Esophagus squamous epithelium (tissue), 5 donors: ENCODE measurements at regions of chr10 and their contacts with region 1.

Region 1: DNA sequence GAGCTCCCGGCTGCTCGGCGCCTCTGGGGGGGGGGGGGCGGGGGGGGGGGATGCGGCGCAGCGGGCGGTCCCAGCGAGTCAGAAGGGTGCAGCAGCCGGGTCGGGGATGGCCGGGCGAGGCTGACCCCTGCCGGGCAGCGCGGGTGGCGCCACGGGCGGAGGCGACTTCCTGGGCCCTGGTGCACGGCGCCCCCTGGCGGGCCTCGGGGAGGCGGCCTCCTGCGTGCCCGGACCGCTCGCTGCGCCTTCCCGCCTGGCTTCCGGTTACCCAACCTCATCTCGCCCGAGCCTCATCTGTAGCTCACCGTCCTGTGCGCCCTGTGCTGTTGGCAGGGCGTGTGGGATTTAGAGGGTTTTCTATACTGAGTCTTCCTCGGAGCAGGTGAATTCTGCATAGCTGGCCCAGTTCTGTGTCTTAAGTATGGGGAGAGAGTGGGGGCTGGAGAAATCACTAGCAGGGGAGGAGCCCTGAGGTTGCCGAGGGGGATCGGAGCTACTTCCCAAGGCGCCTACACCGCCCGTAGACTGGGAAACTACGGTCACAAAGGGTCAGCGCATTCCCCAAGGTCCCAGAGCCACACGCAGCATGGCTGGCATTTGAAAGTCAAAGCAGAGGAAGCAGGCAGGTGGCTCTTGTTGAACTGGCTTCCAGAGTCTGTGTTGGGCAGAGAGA is 28.3 kb upstream of the WDFY4 start:
- DNase-seq: peak; percentile 45
- H3K4me3 ChIP-seq: peak overlapping the region; percentile 34 to 71 (median 43)
- H3K27ac ChIP-seq: peak overlapping the region in 3 of 4 donors; percentile 5 to 59 (median 8)
- H3K4me1 ChIP-seq: peaks cover 15 to 19% (median 17%) of the 10 kb centered on the region in 3 donors
- H3K27me3 ChIP-seq: peaks cover 0 to 21% (median 0%) of the 10 kb centered on the region in 4 donors
- CTCF ChIP-seq: peak; percentile 89 to 100 (median 99)
- POLR2A ChIP-seq: no peak

Region 2: GRCh38 chr10:48363617-48364355 is 292.6 kb before region 1 on chr10:
- intact Hi-C with region 1: loop called (anchors 10 kb)
- DNase-seq: no peak
- H3K4me3 ChIP-seq: no peak overlapping the region
- H3K27ac ChIP-seq: no peak overlapping the region
- H3K4me1 ChIP-seq: peaks cover 0 to 22% (median 3%) of the 10 kb centered on the region in 3 donors
- H3K27me3 ChIP-seq: no peaks in the 10 kb centered on the region
- CTCF ChIP-seq: peak in 5 of 6 experiments; percentile 45 to 77 (median 59)
- POLR2A ChIP-seq: no peak

Region 3: GRCh38 chr10:48551861-48552591 is 104.4 kb before region 1 on chr10:
- intact Hi-C with region 1: loop called (anchors 5 kb)
- DNase-seq: no peak
- H3K4me3 ChIP-seq: no peak overlapping the region
- H3K27ac ChIP-seq: no peak overlapping the region
- H3K4me1 ChIP-seq: peaks cover 0 to 19% (median 0%) of the 10 kb centered on the region in 3 donors
- H3K27me3 ChIP-seq: no peaks in the 10 kb centered on the region
- CTCF ChIP-seq: peak; percentile 47 to 71 (median 59)
- POLR2A ChIP-seq: no peak

Region 4: GRCh38 chr10:48589266-48589665 is 67.1 kb before region 1 on chr10:
- intact Hi-C with region 1: no loop called
- DNase-seq: no peak
- H3K4me3 ChIP-seq: no peak overlapping the region
- H3K27ac ChIP-seq: peak overlapping the region in 1 of 4 donors; percentile 33
- H3K4me1 ChIP-seq: peaks cover 6 to 20% (median 11%) of the 10 kb centered on the region in 3 donors
- H3K27me3 ChIP-seq: no peaks in the 10 kb centered on the region
- CTCF ChIP-seq: no peak
- POLR2A ChIP-seq: no peak

Region 5: GRCh38 chr10:49164559-49165188 is 508.3 kb after region 1 on chr10:
- intact Hi-C with region 1: loop called (anchors 10 kb)
- DNase-seq: no peak
- H3K4me3 ChIP-seq: no peak overlapping the region
- H3K27ac ChIP-seq: no peak overlapping the region
- H3K4me1 ChIP-seq: peaks cover 0 to 8% (median 0%) of the 10 kb centered on the region in 3 donors
- H3K27me3 ChIP-seq: no peaks in the 10 kb centered on the region
- CTCF ChIP-seq: peak; percentile 30 to 70 (median 52)
- POLR2A ChIP-seq: no peak